ENCODE measurements at regions of chr4 and their contacts with region 1.

Region 1: GRCh38 chr4:80221161-80221560 is 23.9 kb downstream of the PRDM8 start:
- DNase-seq: no peak
- H3K4me3 ChIP-seq: no peak overlapping the region
- CTCF ChIP-seq: peak; percentile 26

Region 2: GRCh38 chr4:78951862-78952472 is 1269.2 kb before region 1 on chr4:
- CTCF ChIA-PET with region 1: interaction called, 19 read pairs
- POLR2A ChIA-PET with region 1: no interaction called
- DNase-seq: no peak
- H3K4me3 ChIP-seq: no peak overlapping the region
- CTCF ChIP-seq: peak; percentile 60

Region 3: DNA sequence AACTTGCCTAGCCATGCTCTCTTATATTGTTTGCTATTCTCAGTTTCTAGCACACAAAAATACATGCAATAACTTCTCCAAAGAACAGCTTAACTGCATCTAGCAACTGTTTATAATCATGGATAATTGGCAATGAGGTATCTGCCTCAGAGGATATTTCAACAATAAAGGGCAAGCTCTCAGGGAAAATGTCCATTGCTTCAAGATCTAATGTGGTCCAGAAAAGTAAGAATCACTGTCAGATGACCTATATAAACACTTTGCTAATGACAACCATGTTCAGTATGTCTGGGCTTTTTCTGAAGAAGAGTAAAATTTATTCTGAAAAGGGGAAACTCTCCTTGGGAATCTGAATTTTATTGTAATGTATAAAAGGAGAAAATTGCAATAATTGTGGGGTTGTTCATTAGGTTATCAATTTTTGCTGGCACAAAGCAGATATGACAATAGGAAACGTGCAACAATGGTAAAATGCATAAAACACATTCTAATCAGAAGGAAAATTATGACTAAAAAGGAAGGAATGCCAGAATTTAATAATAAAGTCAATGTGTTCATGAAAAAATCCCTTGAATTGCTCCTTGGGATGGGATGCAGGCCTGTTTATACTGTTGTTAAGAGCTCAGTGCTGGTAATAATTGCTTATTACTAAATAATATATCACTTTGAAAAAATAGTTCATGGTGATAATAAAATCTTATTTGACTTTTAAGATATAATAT is 238.4 kb before region 1 on chr4:
- CTCF ChIA-PET with region 1: no interaction called
- POLR2A ChIA-PET with region 1: no interaction called
- DNase-seq: no peak
- H3K4me3 ChIP-seq: no peak overlapping the region
- CTCF ChIP-seq: no peak

Region 4: GRCh38 chr4:80202190-80202711 is 18.9 kb before region 1 on chr4:
- CTCF ChIA-PET with region 1: interaction called, 38 read pairs
- POLR2A ChIA-PET with region 1: no interaction called
- DNase-seq: no peak
- H3K4me3 ChIP-seq: peak overlapping the region; percentile 63
- CTCF ChIP-seq: peak; percentile 88

Region 5: GRCh38 chr4:80307774-80308465 is 86.8 kb after region 1 on chr4:
- CTCF ChIA-PET with region 1: interaction called, 12 read pairs
- POLR2A ChIA-PET with region 1: no interaction called
- DNase-seq: peak; percentile 37
- H3K4me3 ChIP-seq: peak overlapping the region; percentile 16; the same call in 1 of the 2 replicates
- CTCF ChIP-seq: no peak

Region 6: GRCh38 chr4:80322716-80323115 is 101.6 kb after region 1 on chr4:
- CTCF ChIA-PET with region 1: interaction called, 116 read pairs
- POLR2A ChIA-PET with region 1: no interaction called
- DNase-seq: no peak
- H3K4me3 ChIP-seq: no peak overlapping the region
- CTCF ChIP-seq: peak; percentile 32

Measured in AG04449 (cell line).